ENCODE measurements at regions of chr14 and their contacts with region 1.

Region 1: GRCh38 chr14:90399541-90400444 is 3.0 kb downstream of the CALM1 start:
- DNase-seq: peak; percentile 84 to 93
- ATAC-seq: peak; percentile 41 to 84 (median 72)
- H3K4me3 ChIP-seq: peak overlapping the region; percentile 78 to 100 (median 98)
- H3K27ac ChIP-seq: peak overlapping the region in 8 of 10 donors; percentile 87 to 96 (median 92)
- H3K4me1 ChIP-seq: peaks cover 15 to 63% (median 54%) of the 10 kb centered on the region in 9 donors
- H3K27me3 ChIP-seq: no peaks in the 10 kb centered on the region
- CTCF ChIP-seq: peak; percentile 96 to 100 (median 100)

Region 2: GRCh38 chr14:89406941-89407340 is 992.9 kb before region 1 on chr14:
- intact Hi-C with region 1: no loop called
- DNase-seq: no peak
- ATAC-seq: peak in 7 of 8 donors; percentile 51 to 70 (median 58)
- H3K4me3 ChIP-seq: no peak overlapping the region
- H3K27ac ChIP-seq: peak overlapping the region in 7 of 10 donors; percentile 2 to 45 (median 22)
- H3K4me1 ChIP-seq: peaks cover 3 to 81% (median 53%) of the 10 kb centered on the region in 9 donors
- H3K27me3 ChIP-seq: no peaks in the 10 kb centered on the region
- CTCF ChIP-seq: no peak

Region 3: DNA sequence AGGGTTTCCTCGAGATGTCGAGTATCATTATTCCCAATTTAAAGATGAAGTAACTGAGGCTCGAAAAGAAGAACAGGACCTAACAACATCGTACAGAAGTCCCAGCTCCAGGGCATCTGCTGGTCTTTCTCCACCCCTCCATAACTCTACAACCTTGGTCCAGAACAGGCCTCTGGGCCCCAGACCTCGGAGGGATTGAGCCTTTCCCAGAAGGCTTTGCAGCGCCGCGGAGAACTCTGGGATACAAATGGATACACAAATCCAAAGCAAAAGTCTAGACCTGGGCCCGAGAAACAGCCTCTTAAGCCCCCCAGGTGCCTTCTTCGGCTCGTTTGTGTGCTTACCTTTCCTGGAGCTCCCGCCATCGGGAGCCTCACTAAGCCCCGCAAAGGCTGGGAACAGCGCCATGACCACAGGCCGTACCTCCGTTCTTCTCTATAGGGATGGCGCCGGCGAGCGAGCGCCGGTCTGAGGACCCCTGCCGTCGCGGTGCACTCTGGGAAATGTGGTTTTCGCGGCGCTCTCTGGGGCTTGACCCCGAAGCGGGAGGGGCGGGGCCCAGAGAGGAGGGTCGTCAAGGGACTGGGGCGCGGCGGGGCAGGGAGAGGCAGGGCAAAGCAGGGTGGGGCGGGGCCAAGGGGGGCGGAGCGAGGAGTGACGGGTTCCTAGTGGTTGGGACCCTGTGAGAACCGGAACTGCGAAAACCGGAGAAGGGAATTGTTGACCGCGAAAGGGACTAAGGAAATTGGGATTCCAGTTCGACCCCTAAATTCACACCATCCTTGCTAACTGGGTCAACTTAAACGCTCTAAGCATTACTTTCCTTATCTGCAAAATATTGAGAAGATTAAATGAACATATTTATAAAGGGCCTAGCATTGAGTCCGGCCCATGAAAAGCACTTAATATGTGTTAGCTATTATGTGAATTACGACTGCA is 68.0 kb before region 1 on chr14 and contains the start of gene NRDE2:
- intact Hi-C with region 1: loop called in 2 of 10 experiments (anchors 5 kb)
- DNase-seq: peak; percentile 100
- ATAC-seq: peak; percentile 99 to 100 (median 100)
- H3K4me3 ChIP-seq: peak within 1 kb of the TSS; percentile 62 to 80 (median 72)
- H3K27ac ChIP-seq: peak within 1 kb of the TSS; percentile 73 to 92 (median 87)
- H3K4me1 ChIP-seq: peaks cover 0 to 16% (median 11%) of the 10 kb centered on the region in 9 donors
- H3K27me3 ChIP-seq: peaks cover 0 to 15% (median 0%) of the 10 kb centered on the region in 7 donors
- CTCF ChIP-seq: peak in 1 of 9 donors; percentile 15
- total RNA-seq, gene NRDE2: 11.2 to 16.7 (median 13.5) TPM

Region 4: GRCh38 chr14:90500651-90501370 is 101.0 kb after region 1 on chr14:
- intact Hi-C with region 1: loop called in 1 of 10 experiments (anchors 10 kb)
- DNase-seq: no peak
- ATAC-seq: peak in 7 of 8 donors; percentile 27 to 67 (median 40)
- H3K4me3 ChIP-seq: no peak overlapping the region
- H3K27ac ChIP-seq: peak overlapping the region in 1 of 10 donors; percentile 44
- H3K4me1 ChIP-seq: peaks cover 0 to 16% (median 3%) of the 10 kb centered on the region in 9 donors
- H3K27me3 ChIP-seq: no peaks in the 10 kb centered on the region
- CTCF ChIP-seq: no peak

Region 5: GRCh38 chr14:90536092-90536491 is 136.3 kb after region 1 on chr14:
- intact Hi-C with region 1: loop called in 1 of 10 experiments (anchors 5 kb)
- DNase-seq: peak; percentile 58 to 75
- ATAC-seq: peak; percentile 58 to 84 (median 76)
- H3K4me3 ChIP-seq: no peak overlapping the region
- H3K27ac ChIP-seq: peak overlapping the region; percentile 53 to 87 (median 79)
- H3K4me1 ChIP-seq: peaks cover 13 to 47% (median 39%) of the 10 kb centered on the region in 9 donors
- H3K27me3 ChIP-seq: no peaks in the 10 kb centered on the region
- CTCF ChIP-seq: no peak

Region 6: GRCh38 chr14:90630171-90630806 is 230.5 kb after region 1 on chr14:
- intact Hi-C with region 1: loop called in 1 of 10 experiments (anchors 10 kb)
- DNase-seq: no peak
- ATAC-seq: peak in 6 of 8 donors; percentile 34 to 74 (median 48)
- H3K4me3 ChIP-seq: peak overlapping the region in 1 of 10 donors; percentile 31
- H3K27ac ChIP-seq: peak overlapping the region in 4 of 10 donors; percentile 13 to 82 (median 46)
- H3K4me1 ChIP-seq: peaks cover 13 to 51% (median 42%) of the 10 kb centered on the region in 9 donors
- H3K27me3 ChIP-seq: no peaks in the 10 kb centered on the region
- CTCF ChIP-seq: no peak

Region 7: GRCh38 chr14:90758028-90758889 is 358.5 kb after region 1 on chr14:
- intact Hi-C with region 1: loop called in 7 of 10 experiments (anchors 2 to 10 kb)
- DNase-seq: peak; percentile 90 to 96
- ATAC-seq: peak; percentile 88 to 94 (median 92)
- H3K4me3 ChIP-seq: peak overlapping the region; percentile 39 to 66 (median 60)
- H3K27ac ChIP-seq: peak overlapping the region; percentile 91 to 98 (median 94)
- H3K4me1 ChIP-seq: peaks cover 4 to 34% (median 24%) of the 10 kb centered on the region in 9 donors
- H3K27me3 ChIP-seq: no peaks in the 10 kb centered on the region
- CTCF ChIP-seq: peak; percentile 70 to 98 (median 94)